ENCODE measurements at regions of chr14 and their contacts with region 1.

Region 1: GRCh38 chr14:95300002-95300696 is 19.6 kb downstream of the CLMN start:
- DNase-seq: peak; percentile 90
- ATAC-seq: peak; percentile 85
- H3K4me3 ChIP-seq: peak overlapping the region in 2 of 3 experiments; percentile 14 to 56; a peak in 4 of 6 replicates
- H3K27ac ChIP-seq: peak overlapping the region; percentile 92
- H3K4me1 ChIP-seq: peaks cover 89% of the 10 kb centered on the region
- H3K27me3 ChIP-seq: no peaks in the 10 kb centered on the region
- CTCF ChIP-seq: peak; percentile 42
- EP300 ChIP-seq: peak in 1 of 2 experiments; percentile 82; a peak in 2 of 4 replicates
- POLR2A ChIP-seq: peak in 1 of 2 experiments; percentile 41; a peak in 2 of 4 replicates
- RAD21 ChIP-seq: no peak

Region 2: DNA sequence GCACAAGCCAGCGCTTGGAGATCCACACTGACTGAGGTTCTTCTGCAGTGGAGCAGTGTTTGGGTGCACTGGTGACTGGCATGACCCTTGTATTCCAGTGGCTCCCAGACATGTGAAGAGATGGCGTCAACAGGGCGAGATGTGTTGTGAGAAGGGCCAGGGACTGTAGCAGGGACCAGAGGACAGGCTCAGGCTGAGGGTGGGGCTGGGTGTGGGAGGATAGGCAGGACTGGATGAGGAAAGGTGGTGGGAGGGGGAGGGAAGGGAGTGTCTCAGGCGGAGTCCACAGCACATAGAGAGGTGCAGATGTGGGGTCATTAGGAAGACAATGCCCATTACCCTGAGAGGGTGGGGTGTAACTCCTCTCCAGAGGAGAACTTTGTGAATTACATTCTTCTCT is 221.3 kb before region 1 on chr14:
- CTCF ChIA-PET with region 1: no interaction called
- POLR2A ChIA-PET with region 1: no interaction called
- in situ Hi-C with region 1: no loop called
- intact Hi-C with region 1: loop called (anchors 1 kb)
- DNase-seq: no peak
- ATAC-seq: no peak
- H3K4me3 ChIP-seq: no peak overlapping the region
- H3K27ac ChIP-seq: no peak overlapping the region
- H3K4me1 ChIP-seq: peaks cover 26% of the 10 kb centered on the region
- H3K27me3 ChIP-seq: peaks cover 0 to 26% of the 10 kb centered on the region in 2 experiments; a peak in 3 of 5 replicates
- CTCF ChIP-seq: no peak
- EP300 ChIP-seq: no peak
- POLR2A ChIP-seq: no peak
- RAD21 ChIP-seq: no peak

Region 3: GRCh38 chr14:95197552-95197950 is 102.6 kb before region 1 on chr14:
- CTCF ChIA-PET with region 1: no interaction called
- POLR2A ChIA-PET with region 1: no interaction called
- in situ Hi-C with region 1: no loop called
- intact Hi-C with region 1: no loop called
- DNase-seq: no peak
- ATAC-seq: no peak
- H3K4me3 ChIP-seq: no peak overlapping the region
- H3K27ac ChIP-seq: no peak overlapping the region
- H3K4me1 ChIP-seq: no peaks in the 10 kb centered on the region
- H3K27me3 ChIP-seq: no peaks in the 10 kb centered on the region
- CTCF ChIP-seq: no peak
- EP300 ChIP-seq: no peak
- POLR2A ChIP-seq: no peak
- RAD21 ChIP-seq: no peak

Region 4: DNA sequence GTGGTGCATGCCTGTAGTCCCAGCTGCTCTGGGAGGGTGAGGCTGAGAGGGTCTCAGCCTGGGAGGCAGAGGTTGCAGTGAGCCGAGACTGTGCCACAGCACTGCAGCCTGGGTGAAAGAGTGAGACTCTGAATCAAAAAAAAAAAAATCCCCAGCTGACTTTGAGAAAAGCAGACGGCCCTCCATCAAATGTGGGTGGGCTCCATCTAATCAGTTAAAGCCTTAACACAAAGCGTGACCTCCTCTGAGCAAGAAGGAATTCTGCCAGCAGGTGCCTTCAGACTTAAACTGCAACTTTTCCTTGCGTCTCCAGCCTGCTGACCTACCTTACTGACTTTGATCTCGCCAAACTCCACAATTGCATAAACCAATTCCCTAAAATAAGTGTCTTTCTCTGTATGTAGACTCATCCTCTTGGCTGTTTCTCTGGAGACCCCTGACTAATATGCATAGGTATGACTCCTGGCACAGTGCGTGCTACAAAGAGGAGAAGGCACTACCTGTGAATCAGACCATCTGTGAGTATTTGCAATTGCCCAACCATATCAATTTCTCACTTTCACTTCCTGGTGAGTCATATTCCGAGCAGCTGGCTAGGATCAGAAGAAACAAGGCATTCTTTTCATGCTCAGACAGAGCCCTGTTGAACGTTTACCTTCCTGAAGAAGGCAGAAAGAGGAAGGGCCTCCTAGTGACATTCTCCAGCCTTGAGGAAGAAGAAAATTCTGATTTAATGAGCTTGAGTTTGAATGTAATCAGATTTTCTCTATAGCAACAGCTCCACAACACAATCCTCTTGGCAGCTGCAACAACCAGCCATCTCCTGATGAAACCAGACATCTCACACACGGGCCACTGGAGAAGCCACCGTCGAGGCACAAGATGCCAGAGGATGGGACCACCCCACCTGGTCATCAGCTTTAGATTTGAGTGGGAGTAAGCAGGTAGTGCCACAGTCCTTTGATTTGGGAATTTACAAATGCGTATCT is 34.7 kb before region 1 on chr14:
- CTCF ChIA-PET with region 1: no interaction called
- POLR2A ChIA-PET with region 1: interaction called, 4 read pairs
- in situ Hi-C with region 1: no loop called
- intact Hi-C with region 1: loop called (anchors 2 kb)
- DNase-seq: peak; percentile 95
- ATAC-seq: peak; percentile 98
- H3K4me3 ChIP-seq: peak overlapping the region in 1 of 3 experiments; percentile 26; a peak in 2 of 6 replicates
- H3K27ac ChIP-seq: peak overlapping the region; percentile 62
- H3K4me1 ChIP-seq: peaks cover 31% of the 10 kb centered on the region
- H3K27me3 ChIP-seq: no peaks in the 10 kb centered on the region
- CTCF ChIP-seq: no peak
- EP300 ChIP-seq: peak; percentile 74 to 90
- POLR2A ChIP-seq: no peak
- RAD21 ChIP-seq: no peak

Region 5: GRCh38 chr14:95319312-95320021 is 19.3 kb after region 1 on chr14 and contains the start of gene CLMN:
- CTCF ChIA-PET with region 1: no interaction called
- POLR2A ChIA-PET with region 1: interaction called, 13 read pairs
- in situ Hi-C with region 1: no loop called
- intact Hi-C with region 1: loop called (anchors 2 kb)
- DNase-seq: no peak
- ATAC-seq: peak; percentile 40
- H3K4me3 ChIP-seq: peak within 1 kb of the TSS; percentile 69 to 95 (median 86)
- H3K27ac ChIP-seq: peak within 1 kb of the TSS; percentile 10
- H3K4me1 ChIP-seq: peaks cover 69% of the 10 kb centered on the region
- H3K27me3 ChIP-seq: peaks cover 2 to 18% of the 10 kb centered on the region in 2 experiments; a peak in 2 of 5 replicates
- CTCF ChIP-seq: no peak; the same call in 1 of the 2 replicates
- EP300 ChIP-seq: no peak
- POLR2A ChIP-seq: no peak
- RAD21 ChIP-seq: peak; percentile 28; the same call in 1 of the 2 replicates
- total RNA-seq, gene CLMN: 15.1 and 16.2 TPM in 2 replicates